Ascending aorta (tissue), 2 donors: ENCODE measurements at regions of chr15 and their contacts with region 1.

Region 1: DNA sequence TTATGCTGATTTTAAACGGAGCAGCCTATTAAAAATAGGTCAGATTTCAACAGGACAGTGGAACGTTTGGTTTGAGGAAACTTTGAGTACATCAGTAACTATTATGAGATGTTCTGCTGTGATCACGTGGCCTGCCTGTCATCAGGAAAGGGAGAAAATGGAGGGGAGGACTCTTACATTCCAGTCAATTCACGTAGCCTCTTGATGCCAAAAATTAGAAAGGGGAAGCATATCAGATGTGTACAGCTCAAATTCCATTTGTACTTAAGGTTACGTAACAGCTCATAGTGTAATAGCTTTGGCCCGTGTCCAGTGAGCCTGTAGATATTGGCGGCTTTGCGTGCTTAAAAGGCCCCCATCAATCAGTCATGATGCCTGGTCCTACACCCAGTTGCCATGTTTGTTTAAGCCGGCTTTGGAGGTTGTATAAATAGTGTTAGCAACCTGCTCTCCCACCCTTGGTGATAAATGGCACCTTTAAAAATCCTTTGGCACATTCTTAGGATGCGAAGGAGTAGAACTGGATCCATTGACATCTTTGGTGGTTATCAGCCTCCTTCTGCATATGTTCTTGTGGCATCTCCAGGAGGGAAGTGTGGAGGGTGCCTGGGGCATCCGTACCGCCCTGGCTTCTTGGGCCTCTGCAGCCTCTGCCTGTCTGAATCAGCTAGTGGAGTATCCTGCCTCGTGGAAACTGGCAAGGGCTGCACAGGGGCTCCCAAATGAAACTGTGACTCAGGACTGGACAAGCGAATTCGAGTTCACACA is 163.9 kb downstream of the THSD4 start:
- DNase-seq: peak; percentile 31 to 90
- H3K4me3 ChIP-seq: peak overlapping the region in 1 of 2 donors; percentile 18
- H3K27ac ChIP-seq: peak overlapping the region; percentile 80 to 93
- H3K4me1 ChIP-seq: peaks cover 0 to 49% of the 10 kb centered on the region in 2 donors
- H3K27me3 ChIP-seq: no peaks in the 10 kb centered on the region
- CTCF ChIP-seq: no peak

Region 2: DNA sequence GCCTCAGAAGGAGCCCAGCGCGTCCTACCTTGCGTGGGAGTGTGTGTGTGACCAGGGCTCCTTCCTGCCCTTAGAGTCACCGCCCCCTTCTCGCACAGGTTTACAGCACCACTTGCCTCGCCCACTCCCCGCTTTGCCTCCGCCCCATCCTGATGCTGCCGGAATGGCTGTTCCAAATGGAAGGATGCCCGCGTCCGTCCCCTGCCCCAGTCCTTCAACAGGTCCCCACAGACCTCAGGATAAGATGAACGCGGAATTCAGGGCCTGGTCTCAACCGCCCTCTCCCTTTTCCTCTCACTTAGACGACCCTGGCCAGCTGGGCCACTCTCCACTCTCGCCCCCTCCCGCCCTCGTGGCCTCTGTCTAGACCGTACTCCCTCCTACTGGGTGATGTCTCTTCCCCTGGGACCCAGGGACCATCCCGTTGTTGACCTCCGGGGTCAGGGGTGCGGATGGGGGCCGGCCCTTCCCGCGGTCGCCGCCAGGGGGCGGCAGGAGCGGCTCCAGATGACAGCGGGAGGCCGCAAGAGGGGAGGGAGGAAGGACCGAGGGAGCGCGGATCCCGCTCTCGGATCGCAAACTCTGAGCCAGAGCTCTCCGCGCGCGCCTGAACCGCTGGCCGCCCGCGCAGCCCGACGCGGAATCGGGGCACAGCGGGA is 164.1 kb before region 1 on chr15 and contains the start of gene THSD4:
- intact Hi-C with region 1: loop called (anchors 10 kb)
- DNase-seq: peak in 1 of 2 donors; percentile 84
- H3K4me3 ChIP-seq: peak within 1 kb of the TSS; percentile 77 to 86
- H3K27ac ChIP-seq: peak within 1 kb of the TSS; percentile 92 to 94
- H3K4me1 ChIP-seq: peaks cover 0 to 3% of the 10 kb centered on the region in 2 donors
- H3K27me3 ChIP-seq: no peaks in the 10 kb centered on the region
- CTCF ChIP-seq: peak; percentile 98 to 99 (median 98)
- total RNA-seq, gene THSD4: 151 TPM

Region 3: GRCh38 chr15:71294886-71295638 is 15.9 kb after region 1 on chr15:
- intact Hi-C with region 1: loop called (anchors 2 kb)
- DNase-seq: peak in 1 of 2 donors; percentile 81
- H3K4me3 ChIP-seq: no peak overlapping the region
- H3K27ac ChIP-seq: peak overlapping the region; percentile 62 to 80
- H3K4me1 ChIP-seq: peaks cover 12 to 26% of the 10 kb centered on the region in 2 donors
- H3K27me3 ChIP-seq: no peaks in the 10 kb centered on the region
- CTCF ChIP-seq: no peak

Region 4: GRCh38 chr15:71374607-71375352 is 95.6 kb after region 1 on chr15:
- intact Hi-C with region 1: loop called (anchors 5 kb)
- DNase-seq: no peak
- H3K4me3 ChIP-seq: no peak overlapping the region
- H3K27ac ChIP-seq: peak overlapping the region; percentile 12 to 65
- H3K4me1 ChIP-seq: peaks cover 0 to 24% of the 10 kb centered on the region in 2 donors
- H3K27me3 ChIP-seq: no peaks in the 10 kb centered on the region
- CTCF ChIP-seq: no peak